Calu3 (cell line): ENCODE measurements at regions of chr13 and their contacts with region 1.

Region 1: GRCh38 chr13:39676315-39676876 is 20.9 kb downstream of the COG6 start:
- DNase-seq: peak; percentile 16
- H3K4me3 Mint-ChIP-seq: no peak overlapping the region
- H3K27ac Mint-ChIP-seq: no peak overlapping the region
- H3K4me1 Mint-ChIP-seq: no peaks in the 10 kb centered on the region
- H3K27me3 Mint-ChIP-seq: no peaks in the 10 kb centered on the region
- CTCF ChIP-seq: no peak

Region 2: GRCh38 chr13:39051157-39051556 is 625.2 kb before region 1 on chr13:
- CTCF ChIA-PET with region 1: no interaction called
- intact Hi-C with region 1: loop called (anchors 10 kb)
- DNase-seq: no peak
- H3K4me3 Mint-ChIP-seq: no peak overlapping the region
- H3K27ac Mint-ChIP-seq: no peak overlapping the region
- H3K4me1 Mint-ChIP-seq: no peaks in the 10 kb centered on the region
- H3K27me3 Mint-ChIP-seq: no peaks in the 10 kb centered on the region
- CTCF ChIP-seq: no peak

Region 3: DNA sequence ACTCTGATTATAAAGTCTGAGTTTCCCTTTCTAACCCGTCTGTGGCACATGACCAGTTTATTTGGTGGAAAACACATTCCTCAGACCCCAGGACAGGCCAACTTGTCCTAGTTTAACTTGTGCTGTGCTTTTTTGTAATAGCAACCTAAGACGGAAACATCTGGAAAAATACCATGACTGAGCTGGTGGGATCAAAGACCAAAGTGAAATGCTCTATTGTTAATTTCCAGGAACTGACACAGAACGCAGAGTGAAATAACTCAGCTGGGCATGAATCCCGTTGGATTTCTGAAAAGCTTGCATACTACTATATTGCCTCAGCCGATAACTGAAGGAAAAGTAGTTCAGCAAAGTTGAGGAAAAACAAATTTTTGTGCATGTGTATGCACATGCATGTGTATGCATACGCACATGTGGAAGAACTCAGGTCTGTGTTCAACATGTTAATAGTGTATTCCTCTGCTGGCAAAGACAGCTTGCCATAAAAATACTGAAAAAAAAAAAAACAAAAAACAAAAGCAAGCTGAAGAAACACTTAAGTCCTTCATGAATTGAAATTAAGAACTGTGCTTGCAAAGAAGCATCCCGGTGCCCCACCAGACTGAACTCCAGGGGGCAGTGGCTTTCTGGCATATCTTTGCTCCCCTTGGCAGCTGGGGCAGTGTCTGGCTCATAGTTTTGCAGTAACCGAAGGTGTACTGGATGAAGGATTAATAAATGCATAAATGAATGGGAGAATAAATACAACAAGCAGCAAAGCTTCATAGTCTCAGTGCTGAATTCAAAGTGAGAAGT is 261.2 kb before region 1 on chr13:
- CTCF ChIA-PET with region 1: no interaction called
- intact Hi-C with region 1: loop called (anchors 5 kb)
- DNase-seq: peak; percentile 16
- H3K4me3 Mint-ChIP-seq: no peak overlapping the region
- H3K27ac Mint-ChIP-seq: no peak overlapping the region
- H3K4me1 Mint-ChIP-seq: peaks cover 8% of the 10 kb centered on the region
- H3K27me3 Mint-ChIP-seq: peaks cover 7% of the 10 kb centered on the region
- CTCF ChIP-seq: no peak

Region 4: GRCh38 chr13:39552246-39552645 is 124.2 kb before region 1 on chr13:
- CTCF ChIA-PET with region 1: no interaction called
- intact Hi-C with region 1: no loop called
- DNase-seq: no peak
- H3K4me3 Mint-ChIP-seq: no peak overlapping the region
- H3K27ac Mint-ChIP-seq: no peak overlapping the region
- H3K4me1 Mint-ChIP-seq: no peaks in the 10 kb centered on the region
- H3K27me3 Mint-ChIP-seq: peaks cover 13% of the 10 kb centered on the region
- CTCF ChIP-seq: no peak

Region 5: DNA sequence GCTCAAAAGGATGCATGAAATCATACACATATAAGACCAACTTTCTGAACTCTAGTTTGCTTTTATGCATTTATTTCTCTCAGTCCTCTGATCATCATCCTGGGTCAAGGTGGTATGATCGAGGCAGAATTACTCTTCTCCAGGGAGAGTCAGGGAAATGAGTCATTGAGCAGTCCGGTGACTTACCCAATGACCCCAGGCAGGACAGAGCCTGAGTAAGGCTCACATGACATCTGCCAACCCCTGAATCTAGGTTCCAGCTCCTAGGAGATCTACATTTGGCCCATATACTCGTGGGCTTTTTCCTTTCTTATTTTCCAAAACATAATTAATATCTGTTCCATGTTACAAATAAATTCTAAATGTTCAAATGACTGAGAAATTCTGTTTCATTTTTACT is 487.7 kb after region 1 on chr13:
- CTCF ChIA-PET with region 1: no interaction called
- intact Hi-C with region 1: no loop called
- DNase-seq: peak; percentile 11
- H3K4me3 Mint-ChIP-seq: no peak overlapping the region
- H3K27ac Mint-ChIP-seq: no peak overlapping the region
- H3K4me1 Mint-ChIP-seq: peaks cover 14% of the 10 kb centered on the region
- H3K27me3 Mint-ChIP-seq: no peaks in the 10 kb centered on the region
- CTCF ChIP-seq: no peak